ENCODE measurements at regions of chr18 and their contacts with region 1.

Region 1: DNA sequence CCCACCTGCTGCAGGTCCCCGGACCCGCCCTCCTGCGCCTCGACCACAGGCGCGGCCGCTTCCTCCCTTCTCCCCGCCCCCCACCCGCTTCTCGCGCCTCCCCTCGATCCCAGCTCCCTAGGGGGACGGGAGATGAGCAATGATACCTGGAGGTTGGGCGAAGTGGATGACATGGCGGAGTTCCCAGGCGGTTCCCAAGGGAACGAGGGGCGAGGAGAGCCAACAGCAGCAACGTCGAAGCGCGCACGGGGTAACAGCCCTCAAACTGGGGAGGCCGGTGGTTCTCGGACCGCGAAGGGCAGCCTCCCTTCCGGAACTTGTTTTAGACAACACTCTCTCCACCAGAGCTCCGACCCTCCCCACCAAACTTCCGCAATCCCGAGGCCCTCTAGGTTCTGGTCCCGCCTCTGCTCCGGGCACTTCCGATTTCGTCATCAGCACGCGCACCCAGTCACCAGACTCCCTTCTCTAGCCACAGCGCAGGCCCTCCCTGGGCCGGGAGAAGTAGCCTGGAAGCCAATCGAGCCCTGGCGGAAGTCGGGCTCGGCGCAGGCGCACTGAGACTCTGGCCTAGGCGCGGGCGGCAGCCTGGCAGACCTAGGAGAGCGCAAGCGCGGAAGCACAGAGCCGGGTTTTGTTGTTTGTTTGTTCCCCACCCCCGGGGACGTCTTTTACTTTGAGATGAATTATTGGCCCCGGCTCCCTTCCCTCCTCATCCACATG is at the start of gene VPS4B:
- DNase-seq: peak; percentile 99 to 100 (median 99)
- ATAC-seq: peak; percentile 91
- H3K4me3 ChIP-seq: peak within 1 kb of the TSS; percentile 87 to 96
- H3K4me3 Mint-ChIP-seq: peak within 1 kb of the TSS; percentile 97
- H3K27ac ChIP-seq: peak within 1 kb of the TSS; percentile 94 to 97
- H3K27ac Mint-ChIP-seq: peak within 1 kb of the TSS; percentile 97
- H3K4me1 ChIP-seq: peaks cover 32% of the 10 kb centered on the region
- H3K4me1 Mint-ChIP-seq: peaks cover 30% of the 10 kb centered on the region
- H3K27me3 ChIP-seq: no peaks in the 10 kb centered on the region
- H3K27me3 Mint-ChIP-seq: no peaks in the 10 kb centered on the region
- CTCF ChIP-seq: no peak
- total RNA-seq, gene VPS4B: 58.5 to 76.2 TPM

Region 2: GRCh38 chr18:62186774-62187542 is 1235.3 kb before region 1 on chr18 and contains the starts of genes PIGN and RELCH:
- CTCF ChIA-PET with region 1: no interaction called
- POLR2A ChIA-PET with region 1: interaction called, 3 read pairs
- intact Hi-C with region 1: loop called (anchors 1 to 5 kb)
- DNase-seq: peak; percentile 89 to 99 (median 93)
- ATAC-seq: peak; percentile 91
- H3K4me3 ChIP-seq: peak within 1 kb of the TSS; percentile 92 to 99
- H3K4me3 Mint-ChIP-seq: peak within 1 kb of the TSS; percentile 100
- H3K27ac ChIP-seq: peak within 1 kb of the TSS; percentile 63 to 79
- H3K27ac Mint-ChIP-seq: peak within 1 kb of the TSS; percentile 97
- H3K4me1 ChIP-seq: peaks cover 43% of the 10 kb centered on the region
- H3K4me1 Mint-ChIP-seq: peaks cover 63% of the 10 kb centered on the region
- H3K27me3 ChIP-seq: no peaks in the 10 kb centered on the region
- H3K27me3 Mint-ChIP-seq: no peaks in the 10 kb centered on the region
- CTCF ChIP-seq: no peak
- total RNA-seq, gene PIGN: 8.1 to 9.9 TPM
- total RNA-seq, gene RELCH: 39.2 to 40.5 TPM

Region 3: DNA sequence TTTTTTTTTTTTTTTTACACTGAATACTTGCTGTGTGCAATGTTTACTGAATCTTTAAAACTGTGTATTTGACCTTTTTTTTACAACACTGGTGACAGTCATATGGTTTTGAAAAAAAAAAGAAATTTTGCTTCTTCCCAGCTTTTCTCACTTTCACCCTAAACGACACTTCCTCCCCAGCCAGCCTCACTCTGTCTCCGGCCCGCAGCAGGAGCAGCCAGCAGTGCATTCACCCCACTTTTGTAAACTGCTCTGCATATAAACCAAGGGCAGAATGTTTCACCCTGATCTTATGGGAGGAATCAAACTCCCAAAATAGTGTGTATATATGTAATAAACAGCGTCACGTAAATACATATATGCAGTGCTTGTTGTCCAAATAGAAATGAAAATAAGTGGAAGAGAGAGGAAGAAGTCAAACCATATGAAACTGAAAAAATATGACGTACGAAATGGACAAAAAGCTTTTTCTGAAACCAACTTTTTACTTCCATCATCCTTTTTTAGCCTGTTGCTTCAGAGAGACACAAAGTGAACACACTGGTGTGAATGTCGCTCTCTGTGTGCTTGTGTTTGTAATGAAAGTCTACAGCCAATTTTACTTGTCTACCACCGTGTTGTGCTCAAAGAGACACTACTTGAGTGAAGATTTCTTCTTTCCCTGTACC is 845.3 kb before region 1 on chr18:
- CTCF ChIA-PET with region 1: no interaction called
- POLR2A ChIA-PET with region 1: no interaction called
- intact Hi-C with region 1: loop called in 1 of 2 experiments (anchors 5 kb)
- DNase-seq: no peak
- ATAC-seq: no peak
- H3K4me3 ChIP-seq: no peak overlapping the region
- H3K4me3 Mint-ChIP-seq: no peak overlapping the region
- H3K27ac ChIP-seq: no peak overlapping the region
- H3K27ac Mint-ChIP-seq: no peak overlapping the region
- H3K4me1 ChIP-seq: no peaks in the 10 kb centered on the region
- H3K4me1 Mint-ChIP-seq: no peaks in the 10 kb centered on the region
- H3K27me3 ChIP-seq: no peaks in the 10 kb centered on the region
- H3K27me3 Mint-ChIP-seq: no peaks in the 10 kb centered on the region
- CTCF ChIP-seq: no peak

Region 4: GRCh38 chr18:63155169-63155852 is 266.9 kb before region 1 on chr18:
- CTCF ChIA-PET with region 1: no interaction called
- POLR2A ChIA-PET with region 1: no interaction called
- intact Hi-C with region 1: loop called in 1 of 2 experiments (anchors 5 kb)
- DNase-seq: peak; percentile 66 to 92 (median 78)
- ATAC-seq: peak; percentile 75
- H3K4me3 ChIP-seq: peak overlapping the region; percentile 46 to 53
- H3K4me3 Mint-ChIP-seq: peak overlapping the region; percentile 83
- H3K27ac ChIP-seq: peak overlapping the region; percentile 48 to 99
- H3K27ac Mint-ChIP-seq: peak overlapping the region; percentile 98
- H3K4me1 ChIP-seq: peaks cover 94% of the 10 kb centered on the region
- H3K4me1 Mint-ChIP-seq: peaks cover 99% of the 10 kb centered on the region
- H3K27me3 ChIP-seq: no peaks in the 10 kb centered on the region
- H3K27me3 Mint-ChIP-seq: no peaks in the 10 kb centered on the region
- CTCF ChIP-seq: peak; percentile 79

Region 5: DNA sequence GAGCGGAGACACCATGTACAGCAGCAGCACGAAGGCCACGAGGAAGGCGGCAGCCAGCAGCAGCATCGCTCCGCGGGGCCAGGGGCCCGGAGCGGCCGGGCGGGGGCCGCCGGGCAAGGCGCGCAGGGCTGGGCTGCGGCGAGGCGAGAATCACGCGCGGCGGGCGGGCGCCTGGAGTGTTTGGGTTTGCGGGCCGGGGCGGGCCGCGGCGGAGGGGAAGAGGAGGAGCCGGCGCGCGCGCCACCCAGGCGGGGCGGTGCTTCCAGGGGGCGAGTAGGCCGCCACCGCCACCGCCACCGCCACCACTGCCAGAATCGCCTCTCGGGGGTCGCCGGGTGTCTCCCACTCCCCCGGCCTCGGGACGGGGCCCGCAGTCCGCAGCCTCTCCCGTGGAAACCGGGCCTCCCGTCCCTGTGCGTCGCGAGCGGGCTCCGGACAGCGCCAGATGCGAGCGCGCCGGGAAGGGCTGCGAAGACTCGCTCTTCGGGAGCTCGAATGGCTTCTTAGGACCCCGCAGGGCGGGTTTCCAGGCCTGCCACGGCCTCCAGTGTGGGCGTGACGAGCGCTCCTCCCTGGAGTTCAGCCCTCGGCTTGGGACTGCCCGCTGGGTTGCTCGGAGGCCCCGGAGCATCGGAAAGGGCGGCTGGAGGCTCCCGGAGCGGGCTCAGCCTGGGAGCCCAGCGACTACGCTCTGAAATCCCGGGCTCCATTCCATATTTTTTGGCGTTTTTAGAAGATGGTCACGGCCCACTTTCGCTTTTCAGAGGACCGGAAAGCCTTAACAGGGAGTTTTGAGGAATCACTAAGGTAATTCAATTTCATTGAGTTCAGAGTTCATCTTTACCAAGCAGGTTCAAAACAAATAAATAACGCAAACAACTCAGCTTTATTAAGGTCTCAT is 54.9 kb before region 1 on chr18 and contains the start of gene KDSR:
- CTCF ChIA-PET with region 1: interaction called, 5 read pairs
- POLR2A ChIA-PET with region 1: interaction called, 9 read pairs
- intact Hi-C with region 1: loop called (anchors 1 kb)
- DNase-seq: peak; percentile 58 to 87 (median 78)
- ATAC-seq: peak; percentile 82
- H3K4me3 ChIP-seq: peak within 1 kb of the TSS; percentile 87 to 89
- H3K4me3 Mint-ChIP-seq: peak within 1 kb of the TSS; percentile 89
- H3K27ac ChIP-seq: peak within 1 kb of the TSS; percentile 63 to 65
- H3K27ac Mint-ChIP-seq: peak within 1 kb of the TSS; percentile 86
- H3K4me1 ChIP-seq: peaks cover 33% of the 10 kb centered on the region
- H3K4me1 Mint-ChIP-seq: peaks cover 45% of the 10 kb centered on the region
- H3K27me3 ChIP-seq: no peaks in the 10 kb centered on the region
- H3K27me3 Mint-ChIP-seq: no peaks in the 10 kb centered on the region
- CTCF ChIP-seq: no peak
- total RNA-seq, gene KDSR: 12.8 to 13.9 TPM

Region 6: DNA sequence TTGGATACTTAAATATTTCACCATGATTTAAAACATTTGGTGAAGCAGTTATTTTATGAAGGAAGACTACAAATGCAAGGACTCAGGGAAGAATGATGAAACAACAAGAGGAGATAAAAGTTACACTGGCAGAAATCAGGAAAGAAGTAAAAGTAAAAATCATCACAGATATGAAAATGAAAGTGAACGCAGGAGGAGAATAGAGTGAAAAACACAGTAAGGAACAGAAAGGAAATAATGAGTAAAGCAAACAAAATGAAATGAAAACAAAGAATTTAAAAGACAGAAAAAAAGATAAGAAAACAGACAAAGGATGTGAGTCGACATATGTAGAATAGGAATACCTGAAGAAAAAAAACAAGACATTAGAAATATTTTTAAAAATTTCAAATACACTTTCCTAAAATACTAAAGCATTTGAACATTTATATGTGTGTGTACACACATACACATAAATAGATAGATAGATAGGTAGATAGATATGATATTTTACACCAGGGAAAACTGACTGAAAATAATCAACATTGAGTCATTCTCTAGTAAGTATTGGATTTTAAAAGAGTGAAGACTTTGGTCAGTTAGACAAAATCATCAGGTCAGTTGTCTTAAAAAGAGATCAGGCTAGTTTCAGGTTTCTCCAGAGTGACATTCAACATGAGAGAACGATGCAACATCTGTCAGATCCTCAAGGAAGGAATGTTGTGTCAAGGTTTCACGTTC is 43.2 kb before region 1 on chr18:
- CTCF ChIA-PET with region 1: no interaction called
- POLR2A ChIA-PET with region 1: no interaction called
- intact Hi-C with region 1: no loop called
- DNase-seq: no peak
- ATAC-seq: no peak
- H3K4me3 ChIP-seq: no peak overlapping the region
- H3K4me3 Mint-ChIP-seq: no peak overlapping the region
- H3K27ac ChIP-seq: no peak overlapping the region
- H3K27ac Mint-ChIP-seq: peak overlapping the region; percentile 6
- H3K4me1 ChIP-seq: no peaks in the 10 kb centered on the region
- H3K4me1 Mint-ChIP-seq: peaks cover 10% of the 10 kb centered on the region
- H3K27me3 ChIP-seq: no peaks in the 10 kb centered on the region
- H3K27me3 Mint-ChIP-seq: no peaks in the 10 kb centered on the region
- CTCF ChIP-seq: no peak

Region 7: GRCh38 chr18:63439334-63439733 is 17.1 kb after region 1 on chr18:
- CTCF ChIA-PET with region 1: interaction called, 13 read pairs
- POLR2A ChIA-PET with region 1: no interaction called
- intact Hi-C with region 1: loop called in 1 of 2 experiments (anchors 1 kb)
- DNase-seq: peak; percentile 3 to 75 (median 48)
- ATAC-seq: peak; percentile 84
- H3K4me3 ChIP-seq: no peak overlapping the region
- H3K4me3 Mint-ChIP-seq: no peak overlapping the region
- H3K27ac ChIP-seq: no peak overlapping the region
- H3K27ac Mint-ChIP-seq: no peak overlapping the region
- H3K4me1 ChIP-seq: no peaks in the 10 kb centered on the region
- H3K4me1 Mint-ChIP-seq: no peaks in the 10 kb centered on the region
- H3K27me3 ChIP-seq: no peaks in the 10 kb centered on the region
- H3K27me3 Mint-ChIP-seq: peaks cover 10% of the 10 kb centered on the region
- CTCF ChIP-seq: peak; percentile 94

Region 8: DNA sequence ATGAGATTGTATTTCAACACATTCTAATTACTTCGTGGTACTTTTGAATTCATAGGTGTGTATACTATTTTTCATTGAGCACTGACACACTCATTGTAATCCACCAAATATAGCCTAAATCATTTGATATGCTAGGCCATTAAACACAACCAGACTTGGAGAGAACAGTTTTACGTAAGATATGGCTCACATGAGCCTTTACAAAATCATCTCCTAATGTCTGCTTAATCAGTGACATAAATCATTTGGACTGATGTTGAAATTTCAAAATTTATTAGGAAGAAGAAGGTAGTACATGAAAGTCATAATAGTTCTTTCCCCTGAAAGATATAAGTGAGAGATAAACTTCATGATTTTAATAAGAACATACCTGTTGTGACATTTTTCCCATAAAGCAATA is 1276.8 kb after region 1 on chr18:
- CTCF ChIA-PET with region 1: no interaction called
- POLR2A ChIA-PET with region 1: no interaction called
- intact Hi-C with region 1: no loop called
- DNase-seq: no peak
- ATAC-seq: no peak
- H3K4me3 ChIP-seq: no peak overlapping the region
- H3K4me3 Mint-ChIP-seq: no peak overlapping the region
- H3K27ac ChIP-seq: no peak overlapping the region
- H3K27ac Mint-ChIP-seq: no peak overlapping the region
- H3K4me1 ChIP-seq: no peaks in the 10 kb centered on the region
- H3K4me1 Mint-ChIP-seq: no peaks in the 10 kb centered on the region
- H3K27me3 ChIP-seq: no peaks in the 10 kb centered on the region
- H3K27me3 Mint-ChIP-seq: no peaks in the 10 kb centered on the region
- CTCF ChIP-seq: no peak